Naive thymus-derived CD4-positive, alpha-beta T cell (primary cell): ENCODE measurements at regions of chrX and their contacts with region 1.

Region 1: GRCh38 chrX:49002091-49002935 is at the start of gene GRIPAP1:
- DNase-seq: peak; percentile 61 to 87 (median 79)
- ATAC-seq: peak; percentile 88
- H3K4me3 ChIP-seq: peak within 1 kb of the TSS; percentile 97
- H3K4me3 Mint-ChIP-seq: peak within 1 kb of the TSS; percentile 94 to 99 (median 98)
- H3K27ac ChIP-seq: peak within 1 kb of the TSS; percentile 97
- H3K27ac Mint-ChIP-seq: peak within 1 kb of the TSS; percentile 92 to 100 (median 98)
- H3K4me1 ChIP-seq: peaks cover 9 to 10% of the 10 kb centered on the region in 2 donors
- H3K4me1 Mint-ChIP-seq: peaks cover 7 to 43% (median 32%) of the 10 kb centered on the region in 7 donors
- H3K27me3 ChIP-seq: no peaks in the 10 kb centered on the region
- H3K27me3 Mint-ChIP-seq: no peaks in the 10 kb centered on the region
- total RNA-seq, gene GRIPAP1: 103 to 108 (median 105) TPM

Region 2: DNA sequence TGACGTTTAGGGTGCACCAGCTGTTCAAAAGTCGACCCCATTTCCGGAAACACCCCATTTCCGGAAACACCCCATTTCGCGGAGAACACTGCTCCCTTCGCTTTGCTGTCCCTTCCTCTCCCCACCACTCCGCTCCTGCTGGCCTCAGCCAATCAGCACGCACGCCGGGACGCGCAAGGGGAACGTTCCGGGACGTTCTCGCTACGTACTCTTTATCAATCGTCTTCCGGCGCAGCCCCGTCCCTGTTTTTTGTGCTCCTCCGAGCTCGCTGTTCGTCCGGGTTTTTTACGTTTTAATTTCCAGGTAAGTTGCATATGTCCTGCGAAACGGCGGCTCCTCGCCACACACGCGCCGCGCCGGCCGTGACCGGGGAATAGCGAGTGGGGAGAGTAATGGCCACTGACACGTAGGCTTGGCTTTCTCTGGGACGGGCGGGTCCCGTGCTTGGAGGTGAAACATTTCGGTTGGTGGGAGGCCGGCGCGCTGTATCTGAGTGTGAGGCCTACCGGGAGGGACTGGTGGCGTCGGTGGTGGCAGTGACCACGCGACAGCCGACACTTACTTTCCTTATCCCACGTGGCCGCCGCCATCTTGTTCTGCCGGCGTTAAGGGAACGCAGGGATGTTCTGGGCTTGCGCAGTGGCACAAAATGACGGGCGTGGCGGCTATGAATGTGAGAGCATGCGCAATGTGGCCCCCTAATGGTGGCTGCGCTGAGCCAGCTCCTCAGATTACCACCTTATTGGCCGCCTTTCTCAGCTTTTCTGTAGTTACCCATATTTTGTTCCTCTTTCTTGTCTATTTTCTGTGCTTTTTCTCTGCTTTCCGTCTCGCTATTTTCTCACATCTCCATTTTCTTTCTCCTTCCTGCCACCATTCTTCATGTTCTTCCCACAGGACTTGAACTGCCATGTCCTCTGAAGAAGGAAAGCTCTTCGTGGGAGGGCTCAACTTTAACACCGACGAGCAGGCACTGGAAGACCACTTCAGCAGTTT is 427.7 kb before region 1 on chrX and contains the start of gene RBM3:
- CTCF ChIA-PET with region 1: no interaction called
- POLR2A ChIA-PET with region 1: no interaction called
- intact Hi-C with region 1: loop called in 1 of 2 experiments (anchors 1 kb)
- DNase-seq: peak; percentile 64 to 96 (median 92)
- ATAC-seq: peak; percentile 94
- H3K4me3 ChIP-seq: peak within 1 kb of the TSS; percentile 68
- H3K4me3 Mint-ChIP-seq: peak within 1 kb of the TSS; percentile 88 to 100 (median 97)
- H3K27ac ChIP-seq: peak within 1 kb of the TSS; percentile 99
- H3K27ac Mint-ChIP-seq: peak within 1 kb of the TSS; percentile 95 to 100 (median 99)
- H3K4me1 ChIP-seq: peaks cover 16 to 20% of the 10 kb centered on the region in 2 donors
- H3K4me1 Mint-ChIP-seq: peaks cover 6 to 32% (median 25%) of the 10 kb centered on the region in 7 donors
- H3K27me3 ChIP-seq: no peaks in the 10 kb centered on the region
- H3K27me3 Mint-ChIP-seq: no peaks in the 10 kb centered on the region
- total RNA-seq, gene RBM3: 176 to 374 (median 329) TPM

Region 3: DNA sequence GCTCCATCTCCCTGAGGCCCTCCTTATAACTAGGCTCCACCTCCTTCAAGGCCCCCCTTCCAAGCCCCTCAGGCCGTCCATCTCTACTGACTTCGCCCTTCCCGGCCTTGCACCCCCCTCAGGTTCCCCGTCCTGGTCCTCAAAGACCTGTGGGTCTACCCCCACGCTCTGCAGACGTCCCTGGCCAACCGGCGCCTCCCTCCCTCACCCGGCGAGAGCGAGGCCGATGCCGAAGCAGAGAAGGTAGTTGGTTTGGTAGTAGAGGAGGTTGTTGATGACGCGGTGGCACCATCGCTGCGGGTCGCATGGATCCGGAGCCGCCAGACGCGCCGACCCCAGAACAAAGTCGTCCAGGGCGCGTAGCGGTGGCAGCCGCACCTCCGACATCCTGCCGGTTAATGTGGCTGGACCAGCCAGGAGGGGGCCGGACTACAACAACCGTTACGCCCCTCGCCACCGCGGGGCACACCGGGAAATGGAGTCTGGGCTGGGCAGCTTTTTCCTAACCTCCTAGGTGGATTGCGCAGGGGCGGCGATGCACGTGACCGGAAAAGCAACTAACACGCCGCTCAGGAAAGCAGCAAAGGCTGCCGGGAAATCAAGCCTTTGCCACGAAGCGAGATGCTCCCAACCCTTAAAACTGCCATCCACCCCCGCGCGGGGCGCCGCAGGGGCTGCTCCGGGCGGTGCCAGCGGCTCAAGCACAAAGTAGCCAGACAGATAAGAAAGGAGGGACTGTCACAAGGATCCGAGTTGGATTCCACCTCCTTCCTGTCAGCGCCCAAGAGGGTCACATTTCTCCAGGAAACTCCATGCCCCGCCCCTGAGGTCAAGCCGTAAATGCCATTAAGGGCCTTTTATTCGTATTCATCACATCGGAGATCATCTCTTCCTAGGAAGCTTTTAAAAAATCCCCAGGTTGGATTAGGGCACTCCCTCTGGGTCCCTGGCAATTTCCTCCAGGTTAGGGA is 71.6 kb after region 1 on chrX and contains the start of gene PRAF2:
- CTCF ChIA-PET with region 1: interaction called, 3 read pairs
- POLR2A ChIA-PET with region 1: interaction called, 3 read pairs
- intact Hi-C with region 1: loop called (anchors 1 to 2 kb)
- DNase-seq: peak; percentile 60 to 90 (median 86)
- ATAC-seq: peak; percentile 99
- H3K4me3 ChIP-seq: peak within 1 kb of the TSS; percentile 61
- H3K4me3 Mint-ChIP-seq: peak within 1 kb of the TSS; percentile 73 to 88 (median 83)
- H3K27ac ChIP-seq: peak within 1 kb of the TSS; percentile 78
- H3K27ac Mint-ChIP-seq: peak within 1 kb of the TSS; percentile 66 to 91 (median 86)
- H3K4me1 ChIP-seq: peaks cover 4 to 10% of the 10 kb centered on the region in 2 donors
- H3K4me1 Mint-ChIP-seq: peaks cover 9 to 25% (median 16%) of the 10 kb centered on the region in 7 donors
- H3K27me3 ChIP-seq: no peaks in the 10 kb centered on the region
- H3K27me3 Mint-ChIP-seq: no peaks in the 10 kb centered on the region
- total RNA-seq, gene PRAF2: 15.9 to 28.3 (median 20.4) TPM

Region 4: DNA sequence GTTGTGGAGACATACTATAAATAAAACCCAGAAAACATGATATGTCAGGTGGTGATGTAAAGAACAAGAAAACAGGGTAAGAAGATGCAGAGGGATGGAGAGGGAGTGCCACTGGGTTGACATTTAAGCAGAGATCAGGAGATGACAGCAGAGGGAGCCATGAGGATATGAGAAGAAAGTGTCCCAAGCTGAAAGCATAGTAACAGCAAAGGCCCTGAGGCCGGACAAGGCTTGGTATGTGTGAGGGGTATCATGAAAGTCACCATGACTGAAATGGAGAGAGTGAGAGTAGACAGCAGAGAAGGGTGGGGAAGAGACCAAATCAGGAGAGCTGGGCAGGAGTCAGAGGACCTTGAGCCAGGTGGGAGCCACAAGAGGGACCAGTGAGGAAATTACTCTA is 117.8 kb after region 1 on chrX:
- CTCF ChIA-PET with region 1: no interaction called
- POLR2A ChIA-PET with region 1: interaction called, 3 read pairs
- intact Hi-C with region 1: loop called in 1 of 2 experiments (anchors 1 kb)
- DNase-seq: no peak
- ATAC-seq: no peak
- H3K4me3 ChIP-seq: no peak overlapping the region
- H3K4me3 Mint-ChIP-seq: peak overlapping the region in 3 of 10 donors; percentile 9 to 24 (median 12)
- H3K27ac ChIP-seq: no peak overlapping the region
- H3K27ac Mint-ChIP-seq: peak overlapping the region in 2 of 9 donors; percentile 12 to 30
- H3K4me1 ChIP-seq: peaks cover 16 to 18% of the 10 kb centered on the region in 2 donors
- H3K4me1 Mint-ChIP-seq: peaks cover 32 to 59% (median 37%) of the 10 kb centered on the region in 7 donors
- H3K27me3 ChIP-seq: no peaks in the 10 kb centered on the region
- H3K27me3 Mint-ChIP-seq: no peaks in the 10 kb centered on the region

Region 5: GRCh38 chrX:49199906-49200771 is 197.8 kb after region 1 on chrX and contains the start of gene SYP:
- CTCF ChIA-PET with region 1: no interaction called
- POLR2A ChIA-PET with region 1: no interaction called
- intact Hi-C with region 1: loop called in 1 of 2 experiments (anchors 1 kb)
- DNase-seq: peak; percentile 82 to 89 (median 87)
- ATAC-seq: peak; percentile 100
- H3K4me3 ChIP-seq: peak within 1 kb of the TSS; percentile 50
- H3K4me3 Mint-ChIP-seq: peak within 1 kb of the TSS; percentile 65 to 79 (median 70)
- H3K27ac ChIP-seq: peak within 1 kb of the TSS; percentile 64
- H3K27ac Mint-ChIP-seq: peak within 1 kb of the TSS in 8 of 9 donors; percentile 23 to 84 (median 68)
- H3K4me1 ChIP-seq: no peaks in the 10 kb centered on the region
- H3K4me1 Mint-ChIP-seq: peaks cover 9 to 22% (median 12%) of the 10 kb centered on the region in 7 donors
- H3K27me3 ChIP-seq: no peaks in the 10 kb centered on the region
- H3K27me3 Mint-ChIP-seq: peaks cover 0 to 17% (median 0%) of the 10 kb centered on the region in 5 donors
- total RNA-seq, gene SYP: 0.35 to 2.2 (median 1.1) TPM